ENCODE measurements at regions of chr9 and their contacts with region 1.

Region 1: DNA sequence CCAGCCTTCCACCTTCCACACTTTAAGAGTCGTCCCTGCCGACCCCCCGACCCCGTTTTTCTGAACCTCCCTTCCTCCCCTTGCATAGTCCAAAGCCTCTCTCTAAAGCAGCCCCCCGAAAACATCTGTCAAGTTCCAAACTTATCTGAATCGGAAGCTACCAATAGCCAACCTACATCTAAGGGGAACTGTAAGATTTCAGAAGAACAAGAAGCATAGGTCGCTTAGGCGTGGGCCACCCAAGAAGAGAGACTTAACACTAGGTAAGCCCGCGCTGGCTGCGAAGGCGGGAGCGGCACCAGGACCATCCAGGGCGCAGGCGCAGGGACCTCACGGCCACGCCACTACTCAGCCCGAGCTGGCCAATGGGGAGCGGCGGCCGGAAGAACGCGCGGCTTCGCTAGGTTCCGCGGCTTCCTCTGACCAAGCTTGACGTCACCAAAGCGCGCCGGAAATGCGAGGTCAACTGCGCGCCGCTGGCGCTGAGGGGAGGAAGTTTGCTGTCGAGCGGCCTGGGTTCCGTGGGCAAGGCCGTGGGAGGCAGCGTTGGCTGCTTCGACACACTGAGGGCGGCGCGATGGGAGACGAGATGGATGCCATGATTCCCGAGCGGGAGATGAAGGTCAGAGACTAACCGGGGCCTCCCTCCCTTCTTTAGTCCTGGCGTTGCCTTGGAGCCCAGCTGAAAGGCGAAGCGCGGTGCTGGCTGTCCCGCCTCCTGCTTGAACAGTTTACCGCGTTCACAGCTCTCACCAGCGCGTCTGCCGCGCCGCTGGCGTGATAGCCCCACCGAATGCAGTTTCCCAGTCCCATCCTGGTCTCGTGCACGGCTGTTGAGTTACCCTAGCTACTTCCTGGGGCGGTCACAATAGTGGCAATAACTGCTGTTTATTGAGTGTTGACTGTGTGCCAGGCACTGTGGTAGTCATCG is at the start of gene NUP214:
- DNase-seq: peak; percentile 97 to 100 (median 99)
- ATAC-seq: peak; percentile 97
- H3K4me3 ChIP-seq: peak within 1 kb of the TSS; percentile 76
- H3K4me3 Mint-ChIP-seq: peak within 1 kb of the TSS; percentile 96
- H3K27ac ChIP-seq: peak within 1 kb of the TSS; percentile 78 to 87
- H3K27ac Mint-ChIP-seq: peak within 1 kb of the TSS; percentile 92
- H3K4me1 ChIP-seq: peaks cover 24% of the 10 kb centered on the region
- H3K4me1 Mint-ChIP-seq: peaks cover 37% of the 10 kb centered on the region
- H3K27me3 ChIP-seq: no peaks in the 10 kb centered on the region
- H3K27me3 Mint-ChIP-seq: no peaks in the 10 kb centered on the region
- CTCF ChIP-seq: no peak
- total RNA-seq, gene NUP214: 105 to 107 TPM

Region 2: GRCh38 chr9:130010151-130010988 is 1115.0 kb before region 1 on chr9:
- CTCF ChIA-PET with region 1: no interaction called
- POLR2A ChIA-PET with region 1: no interaction called
- intact Hi-C with region 1: no loop called
- DNase-seq: peak in 7 of 14 experiments; percentile 19 to 94 (median 51)
- ATAC-seq: peak; percentile 73
- H3K4me3 ChIP-seq: no peak overlapping the region
- H3K4me3 Mint-ChIP-seq: peak overlapping the region; percentile 54
- H3K27ac ChIP-seq: peak overlapping the region; percentile 90 to 92
- H3K27ac Mint-ChIP-seq: peak overlapping the region; percentile 93
- H3K4me1 ChIP-seq: peaks cover 62% of the 10 kb centered on the region
- H3K4me1 Mint-ChIP-seq: peaks cover 82% of the 10 kb centered on the region
- H3K27me3 ChIP-seq: no peaks in the 10 kb centered on the region
- H3K27me3 Mint-ChIP-seq: no peaks in the 10 kb centered on the region
- CTCF ChIP-seq: no peak

Region 3: DNA sequence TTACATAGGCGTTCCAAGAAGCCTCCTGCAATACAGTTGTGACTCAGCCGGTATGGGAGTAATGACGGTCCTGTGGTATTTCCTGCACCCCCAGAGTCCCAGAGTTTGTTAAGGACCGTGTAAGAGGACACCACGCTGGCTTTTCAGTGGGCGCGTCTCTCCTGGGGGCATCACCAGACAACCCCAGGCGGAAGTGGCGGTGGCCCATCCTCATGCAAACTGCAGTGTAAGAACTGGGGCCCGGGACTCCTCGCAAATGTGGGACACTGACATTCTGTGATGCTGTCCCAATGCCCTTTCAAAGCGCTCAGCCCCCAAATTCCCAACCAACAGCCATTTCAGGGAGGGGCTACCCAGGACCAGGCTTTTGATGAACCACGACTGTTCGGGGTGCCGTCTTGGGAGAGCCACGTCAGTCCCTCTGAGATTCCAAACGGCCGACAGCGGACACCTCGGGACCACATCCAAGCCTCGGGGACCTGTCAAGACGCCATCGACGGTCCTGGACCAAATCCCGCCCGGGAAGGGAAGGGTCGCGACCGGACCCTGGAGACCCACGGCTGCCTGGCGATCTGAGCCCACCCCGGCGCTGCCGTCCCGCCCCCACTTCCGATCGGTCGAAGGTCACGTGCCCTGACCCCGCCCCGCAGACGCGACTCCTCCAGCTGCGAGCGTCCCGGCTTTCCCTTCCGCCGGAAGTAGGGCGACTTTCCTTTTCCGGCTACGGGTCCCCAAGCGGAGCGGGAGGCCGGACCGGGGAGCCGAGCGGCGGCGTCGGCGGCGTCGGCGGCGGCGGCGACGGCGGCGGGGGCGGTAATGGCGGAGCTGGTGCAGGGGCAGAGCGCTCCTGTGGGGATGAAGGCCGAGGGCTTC is 546.3 kb before region 1 on chr9 and contains the start of gene FUBP3:
- CTCF ChIA-PET with region 1: no interaction called
- POLR2A ChIA-PET with region 1: no interaction called
- intact Hi-C with region 1: loop called in 1 of 2 experiments (anchors 5 kb)
- DNase-seq: peak; percentile 63 to 93 (median 86)
- ATAC-seq: peak; percentile 72
- H3K4me3 ChIP-seq: peak within 1 kb of the TSS; percentile 97
- H3K4me3 Mint-ChIP-seq: peak within 1 kb of the TSS; percentile 88
- H3K27ac ChIP-seq: peak within 1 kb of the TSS; percentile 77 to 87
- H3K27ac Mint-ChIP-seq: peak within 1 kb of the TSS; percentile 80
- H3K4me1 ChIP-seq: peaks cover 26% of the 10 kb centered on the region
- H3K4me1 Mint-ChIP-seq: peaks cover 60% of the 10 kb centered on the region
- H3K27me3 ChIP-seq: no peaks in the 10 kb centered on the region
- H3K27me3 Mint-ChIP-seq: no peaks in the 10 kb centered on the region
- CTCF ChIP-seq: no peak
- total RNA-seq, gene FUBP3: 21.2 to 30.2 TPM

Region 4: GRCh38 chr9:130712564-130713285 is 412.7 kb before region 1 on chr9:
- CTCF ChIA-PET with region 1: no interaction called
- POLR2A ChIA-PET with region 1: no interaction called
- intact Hi-C with region 1: loop called in 1 of 2 experiments (anchors 5 kb)
- DNase-seq: peak; percentile 89 to 97 (median 92)
- ATAC-seq: peak; percentile 97
- H3K4me3 ChIP-seq: peak overlapping the region; percentile 97
- H3K4me3 Mint-ChIP-seq: peak overlapping the region; percentile 93
- H3K27ac ChIP-seq: peak overlapping the region; percentile 86 to 95
- H3K27ac Mint-ChIP-seq: peak overlapping the region; percentile 87
- H3K4me1 ChIP-seq: peaks cover 29% of the 10 kb centered on the region
- H3K4me1 Mint-ChIP-seq: peaks cover 35% of the 10 kb centered on the region
- H3K27me3 ChIP-seq: no peaks in the 10 kb centered on the region
- H3K27me3 Mint-ChIP-seq: no peaks in the 10 kb centered on the region
- CTCF ChIP-seq: no peak

Region 5: GRCh38 chr9:131530920-131531832 is 405.8 kb after region 1 on chr9 and contains the start of gene UCK1:
- CTCF ChIA-PET with region 1: no interaction called
- POLR2A ChIA-PET with region 1: no interaction called
- intact Hi-C with region 1: loop called in 1 of 2 experiments (anchors 1 kb)
- DNase-seq: peak; percentile 57 to 93 (median 72)
- ATAC-seq: peak; percentile 91
- H3K4me3 ChIP-seq: peak within 1 kb of the TSS; percentile 72
- H3K4me3 Mint-ChIP-seq: peak within 1 kb of the TSS; percentile 85
- H3K27ac ChIP-seq: peak within 1 kb of the TSS; percentile 13 to 44
- H3K27ac Mint-ChIP-seq: no peak within 1 kb of the TSS
- H3K4me1 ChIP-seq: peaks cover 44% of the 10 kb centered on the region
- H3K4me1 Mint-ChIP-seq: peaks cover 42% of the 10 kb centered on the region
- H3K27me3 ChIP-seq: no peaks in the 10 kb centered on the region
- H3K27me3 Mint-ChIP-seq: no peaks in the 10 kb centered on the region
- CTCF ChIP-seq: no peak
- total RNA-seq, gene UCK1: 22.1 to 22.5 TPM

Region 6: GRCh38 chr9:132669698-132670456 is 1544.5 kb after region 1 on chr9 and contains the start of gene DDX31:
- CTCF ChIA-PET with region 1: no interaction called
- POLR2A ChIA-PET with region 1: no interaction called
- intact Hi-C with region 1: loop called in 1 of 2 experiments (anchors 10 kb)
- DNase-seq: peak; percentile 78 to 94 (median 84)
- ATAC-seq: peak; percentile 77
- H3K4me3 ChIP-seq: peak within 1 kb of the TSS; percentile 100
- H3K4me3 Mint-ChIP-seq: peak within 1 kb of the TSS; percentile 98
- H3K27ac ChIP-seq: peak within 1 kb of the TSS; percentile 97 to 99
- H3K27ac Mint-ChIP-seq: peak within 1 kb of the TSS; percentile 92
- H3K4me1 ChIP-seq: peaks cover 32% of the 10 kb centered on the region
- H3K4me1 Mint-ChIP-seq: peaks cover 54% of the 10 kb centered on the region
- H3K27me3 ChIP-seq: no peaks in the 10 kb centered on the region
- H3K27me3 Mint-ChIP-seq: no peaks in the 10 kb centered on the region
- CTCF ChIP-seq: no peak
- total RNA-seq, gene DDX31: 11.0 to 11.3 TPM

Measured in CD4-positive, alpha-beta T cell (primary cell).